ENCODE measurements at regions of chr4 and their contacts with region 1.

Region 1: GRCh38 chr4:40699648-40700047 is 50.1 kb upstream of the NSUN7 start:
- DNase-seq: peak; percentile 27
- ATAC-seq: peak; percentile 52
- H3K4me3 Mint-ChIP-seq: no peak overlapping the region
- H3K27ac Mint-ChIP-seq: peak overlapping the region; percentile 51
- H3K4me1 Mint-ChIP-seq: peaks cover 39% of the 10 kb centered on the region
- H3K27me3 Mint-ChIP-seq: no peaks in the 10 kb centered on the region

Region 2: GRCh38 chr4:40418430-40419230 is 281.0 kb before region 1 on chr4:
- CTCF ChIA-PET with region 1: no interaction called
- POLR2A ChIA-PET with region 1: no interaction called
- intact Hi-C with region 1: no loop called
- DNase-seq: no peak
- ATAC-seq: no peak
- H3K4me3 Mint-ChIP-seq: no peak overlapping the region
- H3K27ac Mint-ChIP-seq: no peak overlapping the region
- H3K4me1 Mint-ChIP-seq: no peaks in the 10 kb centered on the region
- H3K27me3 Mint-ChIP-seq: no peaks in the 10 kb centered on the region

Region 3: GRCh38 chr4:40629401-40630334 is 70.0 kb before region 1 on chr4 and contains the start of gene RBM47:
- CTCF ChIA-PET with region 1: no interaction called
- POLR2A ChIA-PET with region 1: no interaction called
- intact Hi-C with region 1: loop called (anchors 2 to 5 kb)
- DNase-seq: peak; percentile 63
- ATAC-seq: peak; percentile 72
- H3K4me3 Mint-ChIP-seq: peak within 1 kb of the TSS; percentile 73
- H3K27ac Mint-ChIP-seq: peak within 1 kb of the TSS; percentile 79
- H3K4me1 Mint-ChIP-seq: peaks cover 36% of the 10 kb centered on the region
- H3K27me3 Mint-ChIP-seq: peaks cover 24% of the 10 kb centered on the region
- total RNA-seq, gene RBM47: 3.2 to 4.4 TPM

Region 4: GRCh38 chr4:40672536-40673526 is 26.8 kb before region 1 on chr4:
- CTCF ChIA-PET with region 1: interaction called, 5 read pairs
- POLR2A ChIA-PET with region 1: interaction called, 11 read pairs
- intact Hi-C with region 1: loop called (anchors 1 kb)
- DNase-seq: peak; percentile 70
- ATAC-seq: peak; percentile 87
- H3K4me3 Mint-ChIP-seq: peak overlapping the region; percentile 57
- H3K27ac Mint-ChIP-seq: peak overlapping the region; percentile 93
- H3K4me1 Mint-ChIP-seq: peaks cover 63% of the 10 kb centered on the region
- H3K27me3 Mint-ChIP-seq: no peaks in the 10 kb centered on the region

Region 5: DNA sequence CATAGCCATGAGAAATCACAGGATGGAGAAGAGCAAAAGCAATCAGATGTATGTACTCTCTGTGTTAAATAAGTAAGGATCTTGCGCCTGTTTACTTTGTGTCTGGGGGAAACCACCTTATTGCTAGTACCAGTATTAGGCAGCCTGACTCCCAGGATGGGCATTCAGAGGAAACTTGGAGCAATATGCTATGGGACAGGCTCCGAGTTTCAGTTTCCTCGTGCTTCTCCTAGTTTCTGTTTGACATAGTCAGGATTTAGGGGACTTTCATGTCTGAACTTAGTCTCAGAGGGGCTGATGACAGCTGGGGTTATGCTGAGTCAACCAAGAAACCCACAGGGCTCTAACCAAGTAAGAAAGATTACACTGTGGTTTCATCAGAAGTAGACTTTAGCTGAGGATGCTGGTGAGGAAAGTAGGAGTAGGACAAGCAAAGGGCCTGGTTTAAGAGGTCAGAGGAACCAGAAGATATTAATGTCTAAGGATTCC is 63.6 kb after region 1 on chr4:
- CTCF ChIA-PET with region 1: no interaction called
- POLR2A ChIA-PET with region 1: no interaction called
- intact Hi-C with region 1: loop called in 1 of 2 experiments (anchors 1 kb)
- DNase-seq: peak; percentile 76
- ATAC-seq: peak; percentile 93
- H3K4me3 Mint-ChIP-seq: no peak overlapping the region
- H3K27ac Mint-ChIP-seq: peak overlapping the region; percentile 47
- H3K4me1 Mint-ChIP-seq: peaks cover 12% of the 10 kb centered on the region
- H3K27me3 Mint-ChIP-seq: peaks cover 1% of the 10 kb centered on the region